PC-3 (cell line): ENCODE measurements at regions of chr2 and their contacts with region 1.

Region 1: DNA sequence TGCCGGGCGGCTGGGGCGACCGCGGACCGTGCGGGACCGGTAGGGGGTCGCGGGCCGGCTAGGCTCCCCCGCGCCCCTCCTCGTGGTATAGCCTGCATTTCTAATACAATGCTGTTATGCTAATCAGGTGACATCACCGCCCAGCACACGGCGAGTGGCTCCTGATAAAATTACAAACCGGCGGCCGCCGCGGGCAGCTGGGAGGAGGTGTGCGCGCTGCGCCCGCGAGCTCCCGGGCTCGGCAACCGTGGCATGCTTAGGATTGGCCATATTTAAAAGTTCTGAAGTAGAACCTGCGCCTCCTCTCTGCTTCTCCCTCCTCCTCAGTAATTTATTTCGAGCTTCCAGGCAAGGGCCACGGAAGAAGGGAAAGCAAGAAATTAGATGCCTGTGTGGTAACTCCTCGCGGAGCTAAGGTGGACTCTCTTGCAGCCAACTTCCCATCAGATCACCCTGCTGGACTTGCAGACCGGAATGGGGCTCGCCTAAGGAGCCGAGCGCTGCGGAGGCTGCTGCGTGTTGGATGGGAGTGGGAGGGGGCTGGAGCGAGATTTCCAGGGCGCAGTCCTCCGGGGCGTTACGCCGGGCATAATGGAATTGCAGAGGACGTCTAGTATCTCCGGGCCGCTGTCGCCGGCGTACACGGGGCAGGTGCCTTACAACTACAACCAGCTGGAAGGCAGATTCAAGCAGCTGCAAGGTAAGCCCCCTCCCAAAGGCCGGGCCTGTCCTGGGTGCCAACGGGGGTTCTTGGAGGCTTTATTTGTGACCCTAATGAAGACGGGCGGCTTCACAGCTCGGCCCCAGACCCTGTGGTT is 102.3 kb downstream of the SPTBN1 start:
- DNase-seq: peak; percentile 74
- ATAC-seq: peak; percentile 61
- H3K4me3 ChIP-seq: peak overlapping the region; percentile 78
- H3K27ac ChIP-seq: peak overlapping the region; percentile 96
- H3K4me1 ChIP-seq: peaks cover 37% of the 10 kb centered on the region
- H3K27me3 ChIP-seq: no peaks in the 10 kb centered on the region
- CTCF ChIP-seq: no peak

Region 2: DNA sequence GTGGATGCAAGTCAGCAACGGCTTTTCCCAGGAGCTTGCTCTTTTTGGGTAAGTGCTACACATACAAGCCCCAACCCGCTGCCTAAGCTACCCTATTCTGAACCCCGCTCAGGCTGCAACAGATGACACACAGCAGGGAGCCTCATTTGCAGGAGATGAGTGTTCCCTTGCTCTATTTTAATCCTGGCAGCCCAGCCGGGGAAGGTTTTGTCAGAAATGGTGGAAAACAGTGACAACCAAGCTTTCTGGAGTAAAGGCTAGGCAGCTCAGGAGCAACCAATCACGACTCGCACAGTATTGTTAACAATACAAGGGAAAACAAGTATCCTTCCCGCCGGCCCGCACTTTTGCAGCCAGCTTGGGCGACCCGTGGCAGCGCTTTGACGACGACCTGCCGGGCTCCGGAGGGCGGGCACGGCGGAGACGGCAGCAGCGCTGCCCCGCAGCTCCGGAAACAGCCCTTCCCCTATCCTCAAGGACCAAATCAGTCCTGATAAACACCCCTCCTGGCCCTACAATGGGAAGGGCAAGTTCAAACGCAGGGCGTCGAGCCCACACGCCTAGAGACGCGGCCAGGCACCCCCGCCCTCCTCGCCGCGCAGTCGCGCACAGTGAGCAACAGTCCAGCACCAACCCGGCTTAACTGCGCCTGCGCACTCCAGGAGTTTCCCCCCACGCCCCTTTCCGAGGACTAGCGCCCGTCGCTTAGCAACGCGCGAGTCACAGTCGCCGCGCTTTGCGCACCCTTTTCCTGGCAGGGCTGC is 228.1 kb before region 1 on chr2:
- CTCF ChIA-PET with region 1: no interaction called
- POLR2A ChIA-PET with region 1: no interaction called
- intact Hi-C with region 1: no loop called
- DNase-seq: peak; percentile 96
- ATAC-seq: peak; percentile 97
- H3K4me3 ChIP-seq: peak overlapping the region; percentile 68
- H3K27ac ChIP-seq: no peak overlapping the region
- H3K4me1 ChIP-seq: peaks cover 18% of the 10 kb centered on the region
- H3K27me3 ChIP-seq: no peaks in the 10 kb centered on the region
- CTCF ChIP-seq: no peak

Region 3: DNA sequence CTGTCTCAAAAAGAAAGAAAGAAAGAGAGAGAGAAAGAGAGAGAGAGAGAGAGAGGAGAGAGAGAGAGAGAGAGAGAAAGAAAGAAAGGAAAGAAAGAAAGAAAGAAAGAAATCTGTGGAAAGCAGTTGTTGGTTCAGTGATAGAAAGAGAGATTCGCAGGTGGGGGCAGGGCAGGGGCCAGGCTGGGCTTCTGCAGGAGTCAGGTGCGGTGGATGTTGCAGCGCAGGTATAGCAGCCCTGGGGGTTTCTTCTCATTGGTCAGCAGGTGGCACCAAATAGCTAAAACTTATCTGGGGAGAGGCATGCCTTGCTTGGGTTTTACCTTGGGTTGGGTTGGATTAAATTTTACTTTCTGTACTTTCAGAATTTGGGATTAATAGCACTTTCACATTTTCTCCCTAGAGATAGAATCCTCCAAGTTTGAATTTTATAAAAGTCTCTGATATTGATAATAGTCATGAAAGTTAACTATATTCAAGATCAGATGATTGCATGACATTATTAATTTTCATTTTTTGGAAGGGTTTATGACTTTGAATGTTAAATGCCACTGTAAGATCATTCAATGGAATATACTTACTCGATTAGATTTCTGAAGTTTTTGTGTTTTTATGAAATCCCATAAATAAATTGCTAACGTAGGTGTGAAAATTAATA is 35.6 kb before region 1 on chr2:
- CTCF ChIA-PET with region 1: interaction called, 3 read pairs
- POLR2A ChIA-PET with region 1: interaction called, 5 read pairs
- intact Hi-C with region 1: loop called (anchors 1 kb)
- DNase-seq: peak; percentile 88
- ATAC-seq: peak; percentile 79
- H3K4me3 ChIP-seq: no peak overlapping the region
- H3K27ac ChIP-seq: peak overlapping the region; percentile 28
- H3K4me1 ChIP-seq: peaks cover 35% of the 10 kb centered on the region
- H3K27me3 ChIP-seq: no peaks in the 10 kb centered on the region
- CTCF ChIP-seq: peak; percentile 79

Region 4: GRCh38 chr2:54545702-54546450 is 12.5 kb before region 1 on chr2:
- CTCF ChIA-PET with region 1: no interaction called
- POLR2A ChIA-PET with region 1: interaction called, 4 read pairs
- intact Hi-C with region 1: loop called (anchors 1 kb)
- DNase-seq: peak; percentile 95
- ATAC-seq: peak; percentile 99
- H3K4me3 ChIP-seq: peak overlapping the region; percentile 22; the same call in 1 of the 2 replicates
- H3K27ac ChIP-seq: peak overlapping the region; percentile 89
- H3K4me1 ChIP-seq: peaks cover 28% of the 10 kb centered on the region
- H3K27me3 ChIP-seq: no peaks in the 10 kb centered on the region
- CTCF ChIP-seq: no peak

Region 5: DNA sequence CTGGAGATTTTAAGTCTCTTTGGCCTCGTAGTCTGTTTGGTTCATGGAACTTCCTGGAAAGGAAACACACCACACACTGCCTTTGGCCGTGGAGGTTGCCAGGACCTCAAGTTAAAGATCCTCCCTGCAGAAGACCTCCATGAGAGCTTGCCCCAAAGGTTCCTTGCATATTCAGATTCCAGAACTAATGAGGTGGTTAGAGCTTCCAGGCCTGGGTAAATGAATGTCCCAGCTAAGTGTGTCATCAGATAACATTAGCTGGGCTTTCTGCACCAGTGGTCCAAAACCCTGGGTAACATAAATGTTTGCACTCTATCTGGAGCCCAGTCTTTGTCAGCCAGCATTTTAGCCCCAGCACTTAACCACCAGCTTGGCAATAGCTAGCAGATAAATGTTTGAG is 42.9 kb after region 1 on chr2:
- CTCF ChIA-PET with region 1: no interaction called
- POLR2A ChIA-PET with region 1: interaction called, 18 read pairs
- intact Hi-C with region 1: no loop called
- DNase-seq: no peak
- ATAC-seq: peak; percentile 16; the same call in 1 of the 2 replicates
- H3K4me3 ChIP-seq: no peak overlapping the region
- H3K27ac ChIP-seq: no peak overlapping the region
- H3K4me1 ChIP-seq: peaks cover 16% of the 10 kb centered on the region; the same call in 1 of the 2 replicates
- H3K27me3 ChIP-seq: no peaks in the 10 kb centered on the region
- CTCF ChIP-seq: no peak

Region 6: DNA sequence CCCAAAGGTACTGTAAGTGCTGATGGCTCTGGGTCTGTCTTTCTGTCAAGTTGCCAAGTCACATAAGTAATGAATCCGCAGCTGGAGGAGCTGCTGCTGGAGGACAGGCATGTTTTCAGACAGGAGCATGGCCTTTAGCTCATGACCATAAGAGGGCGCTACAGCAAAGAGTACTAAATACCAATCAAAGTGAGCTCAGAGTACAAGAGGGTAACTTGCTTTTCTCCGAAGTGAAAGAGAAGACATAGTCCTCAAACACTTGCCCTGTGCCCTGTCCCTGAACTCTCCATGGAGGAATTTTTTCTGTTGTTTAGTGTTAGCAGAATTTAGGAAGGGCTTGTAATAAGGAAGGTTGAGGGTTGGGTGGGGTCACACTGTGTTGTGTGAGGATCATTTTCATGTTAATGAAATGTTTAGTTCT is 107.0 kb after region 1 on chr2:
- CTCF ChIA-PET with region 1: no interaction called
- POLR2A ChIA-PET with region 1: interaction called, 15 read pairs
- intact Hi-C with region 1: no loop called
- DNase-seq: peak; percentile 61
- ATAC-seq: peak; percentile 63; the same call in 1 of the 2 replicates
- H3K4me3 ChIP-seq: no peak overlapping the region
- H3K27ac ChIP-seq: peak overlapping the region; percentile 26
- H3K4me1 ChIP-seq: peaks cover 15% of the 10 kb centered on the region
- H3K27me3 ChIP-seq: no peaks in the 10 kb centered on the region
- CTCF ChIP-seq: peak; percentile 83

Region 7: DNA sequence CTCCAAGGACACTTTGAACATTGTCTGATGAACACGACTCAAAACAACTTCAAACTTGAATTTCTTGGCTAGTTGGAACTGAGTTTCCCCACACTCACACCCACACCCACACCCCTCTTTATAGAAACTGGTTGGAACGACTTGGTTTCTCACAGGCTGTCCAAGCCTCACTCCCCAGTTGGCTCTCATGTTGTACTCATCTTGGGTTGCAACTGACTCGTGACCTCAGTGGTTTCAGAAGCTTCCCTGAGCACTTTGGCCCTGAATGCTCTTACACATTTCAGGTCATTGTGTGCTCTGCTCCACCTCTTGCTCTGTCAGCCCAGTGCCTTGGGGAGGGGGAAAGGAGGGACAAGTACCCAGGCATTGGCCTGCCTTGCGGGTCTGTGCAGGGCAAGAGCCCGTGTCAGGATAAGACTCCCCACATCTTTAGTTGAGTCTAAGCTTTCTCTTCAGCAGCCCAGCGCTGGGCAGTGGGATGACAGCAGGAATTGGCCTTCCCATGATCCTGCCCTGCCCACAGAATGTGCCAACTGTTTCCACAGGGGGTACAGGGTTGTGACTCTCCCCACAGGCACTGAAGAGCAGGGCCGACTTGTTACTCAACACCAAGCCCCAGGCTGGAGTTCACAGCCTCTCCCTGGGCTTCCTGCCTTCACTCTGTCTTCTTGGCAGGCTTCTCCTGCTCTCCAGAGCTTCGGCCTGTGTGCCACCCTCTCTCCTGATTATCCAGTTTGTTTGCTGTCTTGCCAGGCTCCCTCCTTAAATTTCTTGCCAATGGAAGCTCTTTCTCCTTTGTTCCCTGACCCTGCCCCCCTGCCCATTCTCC is 387.2 kb after region 1 on chr2:
- CTCF ChIA-PET with region 1: no interaction called
- POLR2A ChIA-PET with region 1: no interaction called
- intact Hi-C with region 1: no loop called
- DNase-seq: peak; percentile 71
- ATAC-seq: peak; percentile 69
- H3K4me3 ChIP-seq: no peak overlapping the region
- H3K27ac ChIP-seq: peak overlapping the region; percentile 86
- H3K4me1 ChIP-seq: peaks cover 16% of the 10 kb centered on the region
- H3K27me3 ChIP-seq: no peaks in the 10 kb centered on the region
- CTCF ChIP-seq: no peak

Region 8: DNA sequence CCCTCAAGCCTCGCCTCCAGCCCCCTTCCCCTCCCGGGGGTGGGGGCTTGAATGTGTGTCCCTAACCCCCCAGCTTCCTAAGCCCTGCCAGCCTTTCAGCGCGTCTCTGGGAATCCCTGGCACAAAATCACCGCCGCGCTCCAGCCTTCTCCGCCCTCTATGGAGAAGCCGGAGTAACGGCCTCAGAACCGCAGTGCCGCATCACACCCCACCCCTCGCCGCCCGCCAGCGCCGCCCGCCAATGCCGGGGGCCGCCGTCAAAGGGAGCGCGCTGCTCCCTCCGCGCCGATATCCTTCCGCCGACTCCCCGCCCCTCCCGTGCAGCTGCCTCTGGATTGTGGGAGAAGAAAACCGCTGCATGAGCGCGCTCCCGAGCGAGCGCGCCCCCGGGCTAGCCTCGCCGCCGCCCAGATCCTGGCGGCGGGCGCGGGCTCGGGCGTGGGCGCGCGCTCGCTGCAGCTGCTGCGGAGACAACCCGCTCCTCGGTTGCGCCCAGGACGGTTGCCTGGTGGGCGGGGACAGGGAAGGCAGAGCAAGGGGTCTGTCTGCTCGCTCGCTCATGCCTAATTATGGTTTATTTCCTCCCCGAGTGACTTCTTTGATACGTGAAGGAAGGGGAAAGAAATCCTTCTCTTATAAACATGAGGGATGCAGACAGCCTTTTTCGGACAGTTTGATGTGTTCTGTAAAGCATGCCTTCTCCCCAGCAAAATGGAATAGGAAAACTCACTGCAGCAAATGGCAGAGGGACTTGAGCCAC is 861.5 kb after region 1 on chr2 and contains the start of gene CCDC88A:
- CTCF ChIA-PET with region 1: no interaction called
- POLR2A ChIA-PET with region 1: no interaction called
- intact Hi-C with region 1: no loop called
- DNase-seq: peak; percentile 94
- ATAC-seq: peak; percentile 91
- H3K4me3 ChIP-seq: peak within 1 kb of the TSS; percentile 82
- H3K27ac ChIP-seq: no peak within 1 kb of the TSS
- H3K4me1 ChIP-seq: peaks cover 23% of the 10 kb centered on the region
- H3K27me3 ChIP-seq: no peaks in the 10 kb centered on the region
- CTCF ChIP-seq: 0 out of 2 replicates have a peak, but pooled peaks have one; percentile 16
- total RNA-seq, gene CCDC88A: 21.6 and 28.7 TPM in 2 replicates